ENCODE measurements at regions of chr4 and their contacts with region 1.

Region 1: GRCh38 chr4:185101354-185101890 is 41.6 kb upstream of the SLC25A4 start:
- DNase-seq: no peak
- H3K4me3 ChIP-seq: no peak overlapping the region
- H3K27ac ChIP-seq: no peak overlapping the region
- H3K4me1 ChIP-seq: no peaks in the 10 kb centered on the region
- H3K27me3 ChIP-seq: no peaks in the 10 kb centered on the region
- CTCF ChIP-seq: no peak

Region 2: GRCh38 chr4:184310171-184310567 is 791.3 kb before region 1 on chr4:
- CTCF ChIA-PET with region 1: interaction called, 11 read pairs
- POLR2A ChIA-PET with region 1: no interaction called
- intact Hi-C with region 1: no loop called
- DNase-seq: no peak
- H3K4me3 ChIP-seq: no peak overlapping the region
- H3K27ac ChIP-seq: no peak overlapping the region
- H3K4me1 ChIP-seq: no peaks in the 10 kb centered on the region
- H3K27me3 ChIP-seq: no peaks in the 10 kb centered on the region
- CTCF ChIP-seq: no peak

Region 3: DNA sequence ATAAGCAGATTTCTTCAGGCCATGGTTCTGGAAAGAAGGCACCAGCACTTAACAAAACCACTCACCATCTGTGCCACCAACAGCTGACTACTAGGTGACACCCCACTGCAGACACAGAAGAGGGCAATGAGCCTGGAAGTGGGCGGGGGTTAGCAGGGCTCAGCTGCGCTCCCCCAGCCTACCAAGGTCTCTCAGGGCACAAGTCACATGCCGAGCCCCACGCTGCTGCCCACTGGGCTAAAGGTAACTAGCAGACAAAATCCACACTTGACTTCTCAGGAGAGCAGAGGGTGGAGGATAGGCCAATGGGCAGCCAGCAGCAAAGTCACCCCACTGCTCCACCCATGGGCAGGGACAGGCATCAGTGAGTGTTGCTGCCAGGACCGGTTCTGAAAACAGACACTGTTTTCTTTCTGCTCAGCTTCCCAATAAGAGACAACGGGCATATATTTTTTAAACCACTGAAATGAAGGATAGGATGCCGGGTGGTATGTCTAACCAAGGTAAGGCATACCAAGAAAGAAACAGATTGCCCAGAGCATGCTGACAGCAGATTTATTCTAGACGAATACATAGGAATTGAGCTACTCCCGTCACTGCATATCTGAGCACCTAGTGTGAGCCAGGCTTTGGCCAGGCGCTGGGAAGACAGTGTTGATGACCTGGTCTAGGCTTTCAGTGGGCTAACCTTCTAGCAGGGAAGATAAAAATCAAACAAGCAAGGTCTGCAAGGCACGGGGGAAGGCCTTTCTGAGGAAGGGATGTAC is 295.8 kb before region 1 on chr4:
- CTCF ChIA-PET with region 1: no interaction called
- POLR2A ChIA-PET with region 1: interaction called, 18 read pairs
- intact Hi-C with region 1: no loop called
- DNase-seq: peak; percentile 45 to 67
- H3K4me3 ChIP-seq: no peak overlapping the region
- H3K27ac ChIP-seq: peak overlapping the region; percentile 43
- H3K4me1 ChIP-seq: peaks cover 51% of the 10 kb centered on the region
- H3K27me3 ChIP-seq: no peaks in the 10 kb centered on the region
- CTCF ChIP-seq: no peak

Measured in PC-9 (cell line).